ENCODE measurements at regions of chr2 and their contacts with region 1.

Region 1: DNA sequence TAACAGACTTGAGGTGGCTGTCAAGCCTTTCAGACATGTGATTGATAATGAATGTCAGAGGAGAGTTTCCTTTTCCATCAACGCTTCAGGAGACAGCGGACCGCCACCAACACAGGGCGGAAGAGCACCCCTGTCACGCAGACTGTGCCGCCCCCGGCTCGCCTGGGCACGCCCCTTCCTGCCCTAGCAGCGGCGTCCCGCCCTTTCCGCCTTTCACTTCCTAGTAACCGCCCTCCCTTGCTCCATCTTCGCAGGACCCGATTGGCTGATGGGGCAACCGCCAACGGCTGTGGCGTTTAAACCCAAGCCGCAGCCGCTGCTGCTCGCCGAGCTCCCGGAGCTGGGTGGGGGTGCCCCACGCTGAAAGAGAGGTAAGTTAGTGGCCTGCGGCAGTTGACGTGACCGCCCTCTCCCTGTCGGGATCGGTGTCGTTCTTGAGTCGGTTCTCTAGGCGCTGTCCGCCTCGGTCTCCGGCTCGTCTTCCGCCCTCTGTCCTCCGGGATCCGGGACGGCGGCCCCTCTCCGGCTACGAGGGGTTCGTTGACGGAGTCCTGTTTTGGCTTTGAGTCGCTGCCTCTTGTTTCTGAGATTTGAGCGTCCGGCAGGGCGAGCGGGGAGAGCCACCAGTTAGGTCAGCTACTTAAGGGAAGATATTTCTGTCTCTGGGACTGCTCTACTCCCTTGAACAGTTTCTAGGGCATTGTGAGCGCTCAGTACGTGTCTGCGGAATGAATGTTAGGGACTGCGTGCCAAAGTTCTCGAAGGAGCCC is at the start of gene SGO2:
- DNase-seq: peak; percentile 95
- H3K4me3 ChIP-seq: peak within 1 kb of the TSS; percentile 66 to 83 (median 67)
- H3K27ac ChIP-seq: peak within 1 kb of the TSS; percentile 8
- H3K4me1 ChIP-seq: peaks cover 8% of the 10 kb centered on the region
- H3K27me3 ChIP-seq: peaks cover 17 to 19% of the 10 kb centered on the region in 2 experiments
- CTCF ChIP-seq: no peak
- POLR2A ChIP-seq: peak; percentile 90
- total RNA-seq, gene SGO2: 19.7 and 20.5 TPM in 2 replicates

Region 2: GRCh38 chr2:200156166-200156835 is 369.8 kb before region 1 on chr2:
- CTCF ChIA-PET with region 1: no interaction called
- POLR2A ChIA-PET with region 1: no interaction called
- dilution Hi-C with region 1: no loop called
- intact Hi-C with region 1: no loop called
- DNase-seq: peak; percentile 8
- H3K4me3 ChIP-seq: no peak overlapping the region
- H3K27ac ChIP-seq: no peak overlapping the region
- H3K4me1 ChIP-seq: no peaks in the 10 kb centered on the region
- H3K27me3 ChIP-seq: no peaks in the 10 kb centered on the region
- CTCF ChIP-seq: no peak
- POLR2A ChIP-seq: no peak

Region 3: GRCh38 chr2:200383383-200384110 is 142.5 kb before region 1 on chr2:
- CTCF ChIA-PET with region 1: no interaction called
- POLR2A ChIA-PET with region 1: no interaction called
- dilution Hi-C with region 1: no loop called
- intact Hi-C with region 1: no loop called
- DNase-seq: peak; percentile 83
- H3K4me3 ChIP-seq: peak overlapping the region in 2 of 3 experiments; percentile 29 to 61
- H3K27ac ChIP-seq: peak overlapping the region; percentile 67
- H3K4me1 ChIP-seq: peaks cover 35% of the 10 kb centered on the region
- H3K27me3 ChIP-seq: no peaks in the 10 kb centered on the region
- CTCF ChIP-seq: no peak
- POLR2A ChIP-seq: no peak

Region 4: DNA sequence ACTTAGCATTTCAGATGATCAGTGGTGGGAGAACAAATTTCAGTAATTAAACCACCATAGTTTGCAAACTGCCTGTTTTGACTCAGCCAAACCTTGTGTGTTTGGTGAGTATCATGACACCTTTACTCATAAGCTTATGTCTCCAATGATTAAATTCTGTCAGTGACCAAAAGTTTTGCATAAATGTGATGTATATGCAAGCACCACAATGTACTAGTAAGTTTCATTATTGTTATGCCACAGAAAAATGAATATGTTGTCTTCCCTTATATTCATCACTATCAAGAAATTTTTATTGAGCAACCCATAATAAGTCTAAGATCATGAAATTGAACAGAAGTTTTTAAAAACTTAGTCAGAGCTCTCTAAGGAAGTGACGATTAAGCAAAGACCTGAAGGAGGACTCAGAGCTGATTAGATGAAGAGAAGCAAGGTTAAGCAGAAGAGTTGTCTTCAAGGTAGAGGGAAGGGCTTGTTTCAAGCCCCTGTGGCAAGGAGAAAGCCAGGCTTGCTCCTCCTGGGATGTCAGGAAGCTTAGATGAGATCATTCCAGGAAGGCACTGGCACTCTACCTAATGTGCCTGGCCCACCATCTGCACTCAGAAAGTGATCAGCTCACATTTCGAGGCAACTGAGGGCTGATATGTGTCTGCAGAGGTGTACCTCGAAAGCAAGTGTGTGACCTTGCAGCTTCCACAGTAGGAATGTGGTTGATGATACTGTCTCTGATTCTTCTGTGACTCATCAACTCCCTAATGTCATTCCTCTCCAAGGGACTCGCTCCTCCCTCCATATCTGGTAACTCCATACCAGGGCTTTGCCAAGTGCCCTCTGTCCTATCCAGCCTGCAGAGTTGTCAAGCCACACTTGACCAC is 70.9 kb before region 1 on chr2:
- CTCF ChIA-PET with region 1: no interaction called
- POLR2A ChIA-PET with region 1: no interaction called
- dilution Hi-C with region 1: no loop called
- intact Hi-C with region 1: no loop called
- DNase-seq: no peak
- H3K4me3 ChIP-seq: no peak overlapping the region
- H3K27ac ChIP-seq: no peak overlapping the region
- H3K4me1 ChIP-seq: peaks cover 6% of the 10 kb centered on the region
- H3K27me3 ChIP-seq: no peaks in the 10 kb centered on the region
- CTCF ChIP-seq: no peak
- POLR2A ChIP-seq: no peak

Region 5: DNA sequence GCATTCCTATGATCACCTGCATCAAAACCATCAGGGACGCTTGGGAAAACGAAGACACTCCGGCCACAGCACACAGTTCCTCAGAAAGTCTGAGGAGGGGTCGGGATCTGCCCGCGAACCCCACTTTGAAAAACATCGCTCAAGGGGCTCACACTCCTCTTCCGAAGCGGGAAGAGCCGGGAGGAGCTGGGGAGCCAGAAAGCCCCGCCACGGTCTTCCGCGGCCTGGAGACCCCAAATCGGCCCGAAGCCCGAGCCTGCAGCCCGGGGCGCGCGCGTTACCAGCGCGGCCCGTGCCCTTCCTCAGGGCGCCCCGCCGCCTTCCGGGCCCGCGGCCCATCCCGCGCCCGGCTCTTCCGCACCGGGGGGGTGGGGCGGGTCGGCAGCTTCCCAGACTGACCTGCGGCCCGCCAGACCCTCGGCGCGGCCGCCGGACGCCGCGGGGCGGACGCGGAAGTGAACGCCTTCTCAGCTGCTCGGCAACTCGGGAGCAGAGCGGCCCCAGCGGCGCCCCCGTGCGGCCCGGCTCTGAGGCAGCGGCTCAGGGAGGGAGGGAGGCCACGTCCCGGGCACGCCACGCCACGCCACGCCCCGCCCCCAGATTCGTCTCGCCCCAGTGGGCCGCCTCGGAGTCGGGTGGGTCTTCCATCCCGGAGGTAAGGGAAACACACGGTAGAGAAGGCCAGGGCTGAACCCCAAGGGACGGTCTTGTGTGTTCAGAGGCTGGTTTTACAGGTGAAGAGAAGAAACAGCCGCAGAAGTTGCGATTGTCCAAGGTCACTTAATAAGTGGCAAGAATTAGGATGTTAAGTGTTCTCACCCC is 16.2 kb before region 1 on chr2 and contains the start of gene KCTD18:
- CTCF ChIA-PET with region 1: interaction called, 8 read pairs
- POLR2A ChIA-PET with region 1: interaction called, 3 read pairs
- dilution Hi-C with region 1: no loop called
- intact Hi-C with region 1: loop called (anchors 1 kb)
- DNase-seq: peak; percentile 86
- H3K4me3 ChIP-seq: peak within 1 kb of the TSS; percentile 45 to 64 (median 62)
- H3K27ac ChIP-seq: peak within 1 kb of the TSS; percentile 23
- H3K4me1 ChIP-seq: peaks cover 7% of the 10 kb centered on the region
- H3K27me3 ChIP-seq: peaks cover 21 to 36% of the 10 kb centered on the region in 2 experiments
- CTCF ChIP-seq: peak; percentile 88 to 91
- POLR2A ChIP-seq: peak; percentile 73
- total RNA-seq, gene KCTD18: 5.4 and 6.6 TPM in 2 replicates

Region 6: DNA sequence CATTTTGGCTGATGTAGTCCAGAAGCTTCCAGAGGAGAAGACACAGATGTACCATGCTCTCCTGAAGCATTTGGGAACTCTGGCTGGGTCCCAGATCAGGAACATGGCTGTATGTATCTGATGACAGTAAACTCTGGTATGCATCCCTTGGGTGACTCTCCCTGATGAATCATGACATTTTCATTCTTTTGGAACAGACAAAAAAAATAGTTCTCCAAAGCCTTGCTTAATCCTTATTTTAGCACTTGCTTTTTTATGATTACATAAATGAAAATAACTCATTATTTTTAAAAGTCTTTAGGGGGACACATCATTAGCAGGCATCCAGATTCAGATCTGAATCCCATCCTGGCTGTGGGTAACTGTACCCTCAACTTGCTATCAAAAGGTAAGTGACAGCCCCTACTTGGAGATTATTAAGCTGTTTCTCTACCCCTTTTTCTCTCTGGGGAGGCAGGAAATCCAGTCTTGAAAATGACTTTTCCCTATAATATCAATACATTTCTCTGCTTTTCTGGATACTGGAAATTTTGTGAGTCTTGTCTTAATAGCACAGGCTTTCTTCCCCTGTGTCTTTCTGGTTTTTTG is 83.1 kb after region 1 on chr2:
- CTCF ChIA-PET with region 1: no interaction called
- POLR2A ChIA-PET with region 1: no interaction called
- dilution Hi-C with region 1: no loop called
- intact Hi-C with region 1: no loop called
- DNase-seq: no peak
- H3K4me3 ChIP-seq: no peak overlapping the region
- H3K27ac ChIP-seq: no peak overlapping the region
- H3K4me1 ChIP-seq: peaks cover 2% of the 10 kb centered on the region
- H3K27me3 ChIP-seq: no peaks in the 10 kb centered on the region
- CTCF ChIP-seq: no peak
- POLR2A ChIP-seq: no peak

Region 7: GRCh38 chr2:201432038-201432620 is 906.1 kb after region 1 on chr2:
- CTCF ChIA-PET with region 1: no interaction called
- POLR2A ChIA-PET with region 1: no interaction called
- dilution Hi-C with region 1: no loop called
- intact Hi-C with region 1: loop called (anchors 5 kb)
- DNase-seq: peak; percentile 74
- H3K4me3 ChIP-seq: no peak overlapping the region
- H3K27ac ChIP-seq: peak overlapping the region; percentile 12
- H3K4me1 ChIP-seq: peaks cover 24% of the 10 kb centered on the region
- H3K27me3 ChIP-seq: no peaks in the 10 kb centered on the region
- CTCF ChIP-seq: no peak
- POLR2A ChIP-seq: no peak